WTC11 (cell line): ENCODE measurements at regions of chr5 and their contacts with region 1.

Region 1: GRCh38 chr5:173972925-173973615 is 15.9 kb upstream of the C5orf47 start:
- DNase-seq: peak; percentile 89
- ATAC-seq: peak; percentile 69
- H3K4me3 Mint-ChIP-seq: peak overlapping the region; percentile 73
- H3K27ac Mint-ChIP-seq: peak overlapping the region; percentile 94
- H3K4me1 Mint-ChIP-seq: peaks cover 52% of the 10 kb centered on the region
- H3K27me3 Mint-ChIP-seq: peaks cover 7% of the 10 kb centered on the region; the same call in 1 of the 2 replicates
- CTCF ChIP-seq: peak; percentile 78

Region 2: DNA sequence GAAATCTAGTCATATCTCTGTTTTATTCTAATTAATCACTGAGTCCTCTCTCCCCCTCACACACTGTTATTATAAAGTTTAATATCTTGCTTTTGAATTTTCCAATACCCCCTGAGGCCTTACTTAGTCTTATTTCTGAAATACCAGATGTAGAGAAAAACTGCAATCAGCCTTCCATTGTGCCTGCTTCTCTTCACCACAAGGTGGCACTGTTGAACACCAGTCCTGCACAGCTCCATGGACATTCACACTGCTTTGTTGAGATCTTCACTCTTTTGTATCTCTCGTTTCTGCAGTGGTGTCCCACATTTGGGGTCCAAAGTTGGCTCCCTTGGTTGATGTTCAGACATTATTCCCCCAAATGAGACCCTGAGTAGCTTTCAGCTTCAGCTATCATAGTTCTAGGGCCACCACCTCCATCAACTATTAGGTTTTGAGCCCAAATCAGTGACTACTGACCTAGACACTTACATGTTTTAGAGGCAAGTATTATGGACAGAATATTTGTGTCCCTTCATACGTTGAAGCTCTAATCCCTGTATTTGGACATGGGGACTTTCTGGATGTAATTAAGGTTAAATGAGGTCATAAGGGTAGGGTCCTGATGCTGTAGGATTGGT is 380.9 kb before region 1 on chr5:
- CTCF ChIA-PET with region 1: interaction called, 10 read pairs
- POLR2A ChIA-PET with region 1: no interaction called
- DNase-seq: no peak
- ATAC-seq: no peak
- H3K4me3 Mint-ChIP-seq: no peak overlapping the region
- H3K27ac Mint-ChIP-seq: no peak overlapping the region
- H3K4me1 Mint-ChIP-seq: no peaks in the 10 kb centered on the region
- H3K27me3 Mint-ChIP-seq: peaks cover 13% of the 10 kb centered on the region
- CTCF ChIP-seq: peak; percentile 89

Region 3: GRCh38 chr5:173629628-173630027 is 343.4 kb before region 1 on chr5:
- CTCF ChIA-PET with region 1: interaction called, 31 read pairs
- POLR2A ChIA-PET with region 1: no interaction called
- DNase-seq: peak; percentile 81
- ATAC-seq: peak; percentile 80
- H3K4me3 Mint-ChIP-seq: no peak overlapping the region
- H3K27ac Mint-ChIP-seq: no peak overlapping the region
- H3K4me1 Mint-ChIP-seq: peaks cover 52% of the 10 kb centered on the region
- H3K27me3 Mint-ChIP-seq: no peaks in the 10 kb centered on the region
- CTCF ChIP-seq: peak; percentile 75

Region 4: GRCh38 chr5:173887610-173888472 is 85.2 kb before region 1 on chr5 and contains the start of gene CPEB4:
- CTCF ChIA-PET with region 1: interaction called, 11 read pairs
- POLR2A ChIA-PET with region 1: interaction called, 4 read pairs
- DNase-seq: peak; percentile 98
- ATAC-seq: peak; percentile 96
- H3K4me3 Mint-ChIP-seq: peak within 1 kb of the TSS; percentile 94
- H3K27ac Mint-ChIP-seq: peak within 1 kb of the TSS; percentile 100
- H3K4me1 Mint-ChIP-seq: peaks cover 53% of the 10 kb centered on the region
- H3K27me3 Mint-ChIP-seq: peaks cover 3% of the 10 kb centered on the region; the same call in 1 of the 2 replicates
- CTCF ChIP-seq: no peak
- total RNA-seq, gene CPEB4: 9.1 to 12.7 TPM (median 9.2 TPM) in 3 replicates

Region 5: GRCh38 chr5:173984218-173984617 is 11.1 kb after region 1 on chr5:
- CTCF ChIA-PET with region 1: interaction called, 27 read pairs
- POLR2A ChIA-PET with region 1: no interaction called
- DNase-seq: no peak
- ATAC-seq: peak; percentile 82
- H3K4me3 Mint-ChIP-seq: no peak overlapping the region
- H3K27ac Mint-ChIP-seq: no peak overlapping the region
- H3K4me1 Mint-ChIP-seq: peaks cover 16% of the 10 kb centered on the region
- H3K27me3 Mint-ChIP-seq: no peaks in the 10 kb centered on the region
- CTCF ChIP-seq: peak; percentile 40; the same call in 1 of the 2 replicates